PC-9 (cell line): ENCODE measurements at regions of chr1 and their contacts with region 1.

Region 1: GRCh38 chr1:999725-1000356 is at the start of gene HES4:
- DNase-seq: peak; percentile 78 to 94
- H3K4me3 ChIP-seq: peak within 1 kb of the TSS; percentile 97
- H3K27ac ChIP-seq: peak within 1 kb of the TSS; percentile 100
- H3K4me1 ChIP-seq: no peaks in the 10 kb centered on the region
- H3K27me3 ChIP-seq: no peaks in the 10 kb centered on the region
- CTCF ChIP-seq: no peak
- total RNA-seq, gene HES4: 19.2 and 41.8 TPM in 2 replicates

Region 2: DNA sequence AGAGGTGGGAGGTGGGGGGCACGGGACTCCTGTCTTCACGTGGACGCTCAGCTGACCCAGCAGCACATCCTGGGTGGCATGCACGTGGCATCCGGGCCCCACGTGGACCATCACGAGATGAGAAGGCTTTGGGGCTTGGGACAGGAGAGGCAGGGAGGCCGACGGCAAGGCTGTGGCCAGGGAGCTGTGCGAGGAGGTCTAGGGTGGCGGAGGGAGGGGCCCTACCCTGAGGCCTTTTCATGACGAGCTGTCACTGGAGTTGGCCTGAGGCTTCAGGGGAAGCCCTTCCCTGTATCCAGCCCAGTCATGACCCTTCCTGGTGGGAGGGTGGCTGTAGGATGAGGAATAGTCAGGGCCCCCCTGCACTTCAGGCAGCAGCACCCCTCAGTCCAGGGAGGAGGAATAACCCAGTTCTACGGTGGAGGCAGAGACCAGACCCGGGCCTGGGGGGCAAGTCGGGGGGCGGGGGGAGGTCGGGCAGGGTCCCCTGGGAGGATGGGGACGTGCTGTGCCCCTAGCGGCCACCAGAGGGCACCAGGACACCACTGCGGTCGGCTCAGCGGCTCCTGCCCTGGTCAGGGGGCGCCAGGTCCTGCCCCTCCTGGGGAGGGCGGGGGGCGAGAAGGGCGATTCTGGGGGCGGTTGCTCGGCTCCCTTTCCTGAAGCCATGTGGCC is 15.9 kb before region 1 on chr1:
- CTCF ChIA-PET with region 1: no interaction called
- POLR2A ChIA-PET with region 1: no interaction called
- intact Hi-C with region 1: loop called (anchors 1 kb)
- DNase-seq: peak in 1 of 2 experiments; percentile 55
- H3K4me3 ChIP-seq: no peak overlapping the region
- H3K27ac ChIP-seq: no peak overlapping the region
- H3K4me1 ChIP-seq: no peaks in the 10 kb centered on the region
- H3K27me3 ChIP-seq: no peaks in the 10 kb centered on the region
- CTCF ChIP-seq: peak; percentile 92

Region 3: DNA sequence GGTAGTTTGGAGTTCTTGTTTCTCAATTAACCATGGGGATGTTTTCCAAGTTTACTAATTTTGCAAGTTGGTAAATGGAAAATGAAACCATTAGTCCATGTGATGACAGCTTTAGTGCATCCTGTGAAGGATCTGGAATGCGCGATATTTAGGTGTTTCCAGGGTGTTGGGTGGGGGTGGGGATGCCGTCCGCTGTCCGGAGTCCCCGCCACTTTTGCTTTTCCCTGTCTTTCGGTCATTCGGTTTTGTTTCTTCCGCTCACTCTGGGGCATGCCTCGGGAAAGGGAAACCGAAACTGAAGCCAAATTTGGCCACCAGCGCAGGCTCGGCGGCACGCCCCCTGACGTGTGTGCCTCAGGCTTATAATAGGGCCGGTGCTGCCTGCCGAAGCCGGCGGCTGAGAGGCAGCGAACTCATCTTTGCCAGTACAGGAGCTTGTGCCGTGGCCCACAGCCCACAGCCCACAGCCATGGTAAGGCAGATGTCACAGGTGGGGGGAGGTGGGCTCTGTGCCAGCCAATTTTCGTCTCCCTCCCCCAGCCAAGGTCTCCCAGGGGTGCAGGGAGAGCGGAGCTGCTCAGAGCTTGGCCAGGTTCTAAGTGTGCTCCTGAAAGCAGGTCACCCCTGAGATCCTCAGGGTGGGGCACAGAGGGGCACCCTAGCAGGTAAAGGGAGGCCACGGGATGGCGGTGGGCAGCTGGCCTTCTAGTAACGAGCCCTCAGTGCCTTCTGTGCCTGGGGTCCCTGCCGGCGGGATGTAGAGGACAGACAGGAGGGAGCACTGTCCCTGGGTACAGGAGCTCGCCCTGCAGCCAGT is 13.5 kb after region 1 on chr1 and contains the start of gene ISG15:
- CTCF ChIA-PET with region 1: no interaction called
- POLR2A ChIA-PET with region 1: interaction called, 5 read pairs
- intact Hi-C with region 1: loop called (anchors 1 kb)
- DNase-seq: peak; percentile 73 to 74
- H3K4me3 ChIP-seq: peak within 1 kb of the TSS; percentile 65
- H3K27ac ChIP-seq: peak within 1 kb of the TSS; percentile 74
- H3K4me1 ChIP-seq: peaks cover 12% of the 10 kb centered on the region
- H3K27me3 ChIP-seq: no peaks in the 10 kb centered on the region
- CTCF ChIP-seq: no peak
- total RNA-seq, gene ISG15: 20.9 and 37.7 TPM in 2 replicates

Region 4: DNA sequence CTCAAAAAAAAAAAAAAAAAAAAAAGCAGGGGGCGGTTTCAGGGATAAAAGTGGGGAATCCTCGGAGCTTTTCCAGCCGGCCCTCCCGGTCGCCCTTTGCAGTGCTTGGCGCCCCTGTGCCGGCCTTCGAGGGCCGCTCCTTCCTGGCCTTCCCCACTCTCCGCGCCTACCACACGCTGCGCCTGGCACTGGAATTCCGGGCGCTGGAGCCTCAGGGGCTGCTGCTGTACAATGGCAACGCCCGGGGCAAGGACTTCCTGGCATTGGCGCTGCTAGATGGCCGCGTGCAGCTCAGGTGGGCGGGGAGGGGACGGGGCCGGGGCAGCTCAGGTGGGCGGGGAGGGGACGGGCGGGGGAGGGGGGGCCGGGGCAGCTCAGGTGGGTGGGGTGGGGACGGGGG is 48.9 kb after region 1 on chr1:
- CTCF ChIA-PET with region 1: interaction called, 12 read pairs
- POLR2A ChIA-PET with region 1: no interaction called
- intact Hi-C with region 1: no loop called
- DNase-seq: no peak
- H3K4me3 ChIP-seq: no peak overlapping the region
- H3K27ac ChIP-seq: no peak overlapping the region
- H3K4me1 ChIP-seq: no peaks in the 10 kb centered on the region
- H3K27me3 ChIP-seq: no peaks in the 10 kb centered on the region
- CTCF ChIP-seq: no peak

Region 5: DNA sequence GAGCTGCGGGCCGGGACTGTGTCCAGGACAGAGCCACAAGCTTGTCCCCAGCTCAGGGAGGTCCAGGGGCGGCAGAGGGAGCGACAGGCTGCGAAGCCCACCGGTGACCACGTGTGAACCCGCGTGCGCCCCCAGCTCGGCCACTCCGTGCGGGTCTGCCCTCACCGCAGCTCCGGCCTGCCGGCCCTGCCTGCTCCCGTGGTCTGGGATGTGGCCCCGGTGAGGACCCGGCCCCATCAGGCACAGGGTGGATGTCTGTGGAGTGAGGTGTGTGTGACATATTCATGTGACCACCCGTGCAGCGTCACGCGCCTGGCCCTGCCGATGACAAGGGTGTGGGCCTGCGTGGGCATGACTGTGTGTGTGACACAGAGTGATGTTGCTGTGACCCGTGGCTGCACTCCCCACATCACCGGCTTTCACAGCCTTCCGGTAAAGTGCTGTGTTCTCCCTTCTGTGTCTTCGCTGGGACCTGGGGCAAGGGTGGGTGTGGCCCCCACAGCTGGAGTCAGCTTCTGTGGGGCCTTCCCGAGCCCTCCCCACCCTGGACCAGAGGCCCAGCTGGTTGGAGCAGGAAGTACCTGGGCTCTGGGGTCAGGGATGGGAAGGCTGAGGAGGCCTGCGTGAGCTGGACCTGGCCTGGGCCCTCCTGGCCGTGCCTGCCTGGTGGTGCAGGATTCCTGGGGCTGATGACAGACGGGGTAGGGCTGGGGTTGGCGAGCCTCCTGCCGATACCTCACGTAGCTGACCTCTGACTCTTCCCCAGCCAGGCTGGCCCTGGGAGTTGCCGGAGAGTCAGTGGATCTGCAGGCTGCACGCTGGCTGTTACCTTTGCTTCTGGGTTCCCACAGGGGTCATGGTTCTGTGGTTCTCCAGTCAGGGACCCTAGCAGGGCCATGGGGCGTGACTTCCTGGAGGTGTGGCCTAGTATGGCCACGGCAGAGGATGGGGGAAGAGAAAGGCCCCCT is 70.2 kb after region 1 on chr1:
- CTCF ChIA-PET with region 1: no interaction called
- POLR2A ChIA-PET with region 1: interaction called, 5 read pairs
- intact Hi-C with region 1: loop called (anchors 5 kb)
- DNase-seq: peak; percentile 86 to 88
- H3K4me3 ChIP-seq: peak overlapping the region; percentile 86
- H3K27ac ChIP-seq: peak overlapping the region; percentile 87
- H3K4me1 ChIP-seq: peaks cover 52% of the 10 kb centered on the region
- H3K27me3 ChIP-seq: no peaks in the 10 kb centered on the region
- CTCF ChIP-seq: no peak

Region 6: GRCh38 chr1:1079408-1080121 is 79.7 kb after region 1 on chr1:
- CTCF ChIA-PET with region 1: no interaction called
- POLR2A ChIA-PET with region 1: interaction called, 11 read pairs
- intact Hi-C with region 1: loop called (anchors 5 kb)
- DNase-seq: peak; percentile 96
- H3K4me3 ChIP-seq: peak overlapping the region; percentile 55
- H3K27ac ChIP-seq: peak overlapping the region; percentile 93
- H3K4me1 ChIP-seq: peaks cover 20% of the 10 kb centered on the region
- H3K27me3 ChIP-seq: no peaks in the 10 kb centered on the region
- CTCF ChIP-seq: no peak

Region 7: GRCh38 chr1:1307908-1308755 is 308.3 kb after region 1 on chr1 and contains the starts of genes ACAP3 and PUSL1:
- CTCF ChIA-PET with region 1: no interaction called
- POLR2A ChIA-PET with region 1: no interaction called
- intact Hi-C with region 1: loop called (anchors 10 kb)
- DNase-seq: peak; percentile 72 to 89
- H3K4me3 ChIP-seq: peak within 1 kb of the TSS; percentile 84
- H3K27ac ChIP-seq: peak within 1 kb of the TSS; percentile 41
- H3K4me1 ChIP-seq: peaks cover 36% of the 10 kb centered on the region
- H3K27me3 ChIP-seq: no peaks in the 10 kb centered on the region
- CTCF ChIP-seq: no peak
- total RNA-seq, gene ACAP3: 53.5 and 54.8 TPM in 2 replicates
- total RNA-seq, gene PUSL1: 18.0 and 18.9 TPM in 2 replicates